CD8-positive, alpha-beta T cell (primary cell): ENCODE measurements at regions of chr17 and their contacts with region 1.

Region 1: GRCh38 chr17:29931231-29931932 is 1.4 kb upstream of the SSH2 start:
- DNase-seq: peak; percentile 27 to 91 (median 70)
- ATAC-seq: peak; percentile 66
- H3K4me3 ChIP-seq: peak overlapping the region; percentile 77 to 82
- H3K4me3 Mint-ChIP-seq: no peak overlapping the region
- H3K27ac ChIP-seq: peak overlapping the region in 1 of 2 experiments; percentile 37
- H3K27ac Mint-ChIP-seq: no peak overlapping the region
- H3K4me1 ChIP-seq: peaks cover 27% of the 10 kb centered on the region
- H3K4me1 Mint-ChIP-seq: peaks cover 29% of the 10 kb centered on the region
- H3K27me3 ChIP-seq: no peaks in the 10 kb centered on the region
- H3K27me3 Mint-ChIP-seq: no peaks in the 10 kb centered on the region
- CTCF ChIP-seq: peak; percentile 85

Region 2: DNA sequence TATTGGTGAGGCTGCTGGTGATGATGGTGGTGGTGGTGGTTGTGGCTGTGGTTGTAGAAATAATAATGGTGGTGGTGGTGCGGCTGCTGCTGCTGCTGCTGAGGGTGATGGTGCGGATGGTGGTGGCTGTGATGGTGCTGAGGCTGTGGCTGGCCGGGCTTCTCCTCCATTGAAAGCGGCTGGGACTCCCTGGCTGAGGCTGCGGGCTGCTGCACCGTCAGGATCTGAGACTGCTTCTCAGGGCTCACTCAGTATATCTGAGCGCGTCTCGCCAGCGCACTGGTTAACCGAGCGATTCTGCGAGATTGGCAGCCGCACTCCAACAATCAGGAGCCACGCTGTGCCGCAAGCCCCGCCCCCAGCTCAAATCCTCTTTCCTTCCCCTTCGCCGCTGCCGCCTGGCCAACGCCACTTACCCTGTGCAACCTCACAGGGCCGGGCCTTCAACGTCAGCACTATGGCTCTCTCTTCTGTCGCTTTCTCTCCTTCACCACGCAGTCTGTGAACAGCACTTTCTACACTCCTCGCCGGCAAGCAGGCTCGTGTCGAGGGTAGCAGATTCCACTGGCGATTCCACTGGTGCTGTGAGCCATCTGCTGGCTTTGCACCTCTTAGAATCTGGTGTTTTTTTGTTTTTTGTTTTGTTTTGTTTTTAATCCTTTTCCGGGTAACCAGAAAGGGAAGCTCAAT is 637.3 kb before region 1 on chr17 and contains the start of gene NUFIP2:
- CTCF ChIA-PET with region 1: no interaction called
- POLR2A ChIA-PET with region 1: no interaction called
- intact Hi-C with region 1: loop called in 1 of 2 experiments (anchors 5 kb)
- DNase-seq: peak; percentile 94 to 100 (median 99)
- ATAC-seq: peak; percentile 86
- H3K4me3 ChIP-seq: peak within 1 kb of the TSS; percentile 93 to 94
- H3K4me3 Mint-ChIP-seq: peak within 1 kb of the TSS; percentile 99
- H3K27ac ChIP-seq: peak within 1 kb of the TSS; percentile 70 to 89
- H3K27ac Mint-ChIP-seq: peak within 1 kb of the TSS; percentile 98
- H3K4me1 ChIP-seq: peaks cover 40% of the 10 kb centered on the region
- H3K4me1 Mint-ChIP-seq: peaks cover 42% of the 10 kb centered on the region
- H3K27me3 ChIP-seq: no peaks in the 10 kb centered on the region
- H3K27me3 Mint-ChIP-seq: no peaks in the 10 kb centered on the region
- CTCF ChIP-seq: no peak
- total RNA-seq, gene NUFIP2: 67.9 to 71.8 TPM

Region 3: DNA sequence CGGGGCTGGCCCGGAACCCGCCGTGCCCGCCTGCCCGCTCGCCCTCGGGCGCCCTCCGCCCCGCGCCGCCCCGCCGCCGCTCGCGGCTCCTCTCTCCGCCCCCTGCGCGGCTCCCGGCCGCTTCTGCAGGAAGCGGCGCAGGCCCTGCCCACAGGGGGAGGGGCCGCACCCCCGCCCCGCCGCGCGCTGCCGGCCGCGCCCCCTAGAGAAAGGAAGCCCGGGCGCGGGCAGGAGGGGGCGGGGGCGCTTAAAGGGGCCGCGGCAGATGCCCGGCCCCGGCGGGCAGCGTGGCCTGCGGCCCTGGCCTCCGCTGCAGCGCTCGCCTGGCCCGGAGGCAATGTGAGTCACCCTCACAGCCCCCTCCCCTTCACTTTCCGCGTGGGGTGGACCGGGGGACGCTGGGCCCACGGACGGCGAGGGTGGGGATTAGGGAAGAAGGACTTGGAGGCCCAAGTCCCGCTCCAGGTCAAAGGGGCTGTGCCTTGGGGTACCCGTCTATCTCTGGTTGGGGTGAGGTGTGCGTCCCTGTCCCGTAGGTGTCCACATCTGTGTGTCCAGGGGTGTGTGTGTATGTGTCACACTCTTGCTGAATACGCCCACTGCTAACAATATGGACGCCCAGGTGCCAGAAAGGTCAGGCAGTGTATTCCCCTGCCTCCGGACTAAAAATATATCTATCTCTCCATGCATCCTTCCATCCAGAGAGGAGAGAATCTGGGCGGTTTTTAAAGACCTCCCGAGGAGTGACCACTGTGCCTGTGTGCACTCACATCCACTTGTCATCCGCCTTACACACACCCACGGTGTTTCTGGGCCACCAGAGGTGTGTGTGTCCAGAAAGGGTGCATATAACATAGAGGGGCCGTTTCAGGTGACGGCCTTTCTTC is 341.6 kb before region 1 on chr17 and contains the start of gene GIT1:
- CTCF ChIA-PET with region 1: interaction called, 3 read pairs
- POLR2A ChIA-PET with region 1: no interaction called
- intact Hi-C with region 1: loop called in 1 of 2 experiments (anchors 2 kb)
- DNase-seq: peak; percentile 59 to 93 (median 83)
- ATAC-seq: peak; percentile 86
- H3K4me3 ChIP-seq: peak within 1 kb of the TSS; percentile 73 to 75
- H3K4me3 Mint-ChIP-seq: peak within 1 kb of the TSS; percentile 93
- H3K27ac ChIP-seq: peak within 1 kb of the TSS; percentile 18 to 64
- H3K27ac Mint-ChIP-seq: peak within 1 kb of the TSS; percentile 89
- H3K4me1 ChIP-seq: peaks cover 78% of the 10 kb centered on the region
- H3K4me1 Mint-ChIP-seq: peaks cover 59% of the 10 kb centered on the region
- H3K27me3 ChIP-seq: no peaks in the 10 kb centered on the region
- H3K27me3 Mint-ChIP-seq: no peaks in the 10 kb centered on the region
- CTCF ChIP-seq: no peak
- total RNA-seq, gene GIT1: 25.8 to 27.0 TPM

Region 4: DNA sequence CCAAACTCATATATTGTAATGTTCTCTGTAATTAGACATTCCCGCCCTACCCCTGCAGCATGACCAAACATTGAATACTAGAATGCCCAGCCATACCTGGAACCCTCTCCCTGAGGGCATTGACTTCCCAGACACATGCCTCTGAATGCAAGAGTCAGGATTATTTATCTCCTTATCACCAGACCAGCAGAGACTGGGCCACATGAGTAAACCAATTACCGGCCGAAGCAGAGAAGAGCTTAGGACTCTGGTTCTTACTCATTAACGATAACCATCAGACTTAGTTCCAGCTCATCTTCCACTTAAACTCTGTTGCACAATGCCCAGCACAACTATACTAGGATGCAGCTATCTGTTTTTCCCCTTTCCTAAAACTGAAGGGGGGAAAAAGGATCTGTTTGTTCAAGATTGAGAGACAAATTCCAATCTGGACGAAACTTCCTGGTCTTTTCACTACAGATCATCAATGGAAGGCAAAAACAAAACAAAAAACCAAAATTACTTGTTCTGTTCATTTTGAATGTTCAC is 220.4 kb before region 1 on chr17:
- CTCF ChIA-PET with region 1: interaction called, 3 read pairs
- POLR2A ChIA-PET with region 1: interaction called, 4 read pairs
- intact Hi-C with region 1: loop called in 1 of 2 experiments (anchors 5 kb)
- DNase-seq: no peak
- ATAC-seq: no peak
- H3K4me3 ChIP-seq: no peak overlapping the region
- H3K4me3 Mint-ChIP-seq: no peak overlapping the region
- H3K27ac ChIP-seq: no peak overlapping the region
- H3K27ac Mint-ChIP-seq: peak overlapping the region; percentile 84
- H3K4me1 ChIP-seq: peaks cover 36% of the 10 kb centered on the region
- H3K4me1 Mint-ChIP-seq: peaks cover 73% of the 10 kb centered on the region
- H3K27me3 ChIP-seq: no peaks in the 10 kb centered on the region
- H3K27me3 Mint-ChIP-seq: no peaks in the 10 kb centered on the region
- CTCF ChIP-seq: no peak

Region 5: GRCh38 chr17:29867643-29868181 is 63.7 kb before region 1 on chr17:
- CTCF ChIA-PET with region 1: interaction called, 20 read pairs
- POLR2A ChIA-PET with region 1: no interaction called
- intact Hi-C with region 1: loop called (anchors 1 to 5 kb)
- DNase-seq: peak in 1 of 9 experiments; percentile 16
- ATAC-seq: no peak
- H3K4me3 ChIP-seq: no peak overlapping the region
- H3K4me3 Mint-ChIP-seq: no peak overlapping the region
- H3K27ac ChIP-seq: no peak overlapping the region
- H3K27ac Mint-ChIP-seq: peak overlapping the region; percentile 27
- H3K4me1 ChIP-seq: no peaks in the 10 kb centered on the region
- H3K4me1 Mint-ChIP-seq: peaks cover 29% of the 10 kb centered on the region
- H3K27me3 ChIP-seq: no peaks in the 10 kb centered on the region
- H3K27me3 Mint-ChIP-seq: no peaks in the 10 kb centered on the region
- CTCF ChIP-seq: no peak

Region 6: GRCh38 chr17:30021708-30022317 is 90.4 kb after region 1 on chr17:
- CTCF ChIA-PET with region 1: interaction called, 7 read pairs
- POLR2A ChIA-PET with region 1: no interaction called
- intact Hi-C with region 1: loop called (anchors 1 to 5 kb)
- DNase-seq: peak in 6 of 9 experiments; percentile 3 to 68 (median 31)
- ATAC-seq: peak; percentile 76
- H3K4me3 ChIP-seq: no peak overlapping the region
- H3K4me3 Mint-ChIP-seq: no peak overlapping the region
- H3K27ac ChIP-seq: no peak overlapping the region
- H3K27ac Mint-ChIP-seq: no peak overlapping the region
- H3K4me1 ChIP-seq: no peaks in the 10 kb centered on the region
- H3K4me1 Mint-ChIP-seq: peaks cover 2% of the 10 kb centered on the region
- H3K27me3 ChIP-seq: no peaks in the 10 kb centered on the region
- H3K27me3 Mint-ChIP-seq: peaks cover 5% of the 10 kb centered on the region
- CTCF ChIP-seq: peak; percentile 88

Region 7: GRCh38 chr17:30104575-30105339 is 173.4 kb after region 1 on chr17:
- CTCF ChIA-PET with region 1: no interaction called
- POLR2A ChIA-PET with region 1: no interaction called
- intact Hi-C with region 1: no loop called
- DNase-seq: peak; percentile 44 to 85 (median 71)
- ATAC-seq: peak; percentile 95
- H3K4me3 ChIP-seq: peak overlapping the region; percentile 43 to 45
- H3K4me3 Mint-ChIP-seq: peak overlapping the region; percentile 85
- H3K27ac ChIP-seq: no peak overlapping the region
- H3K27ac Mint-ChIP-seq: no peak overlapping the region
- H3K4me1 ChIP-seq: no peaks in the 10 kb centered on the region
- H3K4me1 Mint-ChIP-seq: peaks cover 6% of the 10 kb centered on the region
- H3K27me3 ChIP-seq: no peaks in the 10 kb centered on the region
- H3K27me3 Mint-ChIP-seq: peaks cover 3% of the 10 kb centered on the region
- CTCF ChIP-seq: peak; percentile 93

Region 8: GRCh38 chr17:30869005-30869404 is 937.6 kb after region 1 on chr17:
- CTCF ChIA-PET with region 1: no interaction called
- POLR2A ChIA-PET with region 1: no interaction called
- intact Hi-C with region 1: no loop called
- DNase-seq: no peak
- ATAC-seq: no peak
- H3K4me3 ChIP-seq: no peak overlapping the region
- H3K4me3 Mint-ChIP-seq: no peak overlapping the region
- H3K27ac ChIP-seq: no peak overlapping the region
- H3K27ac Mint-ChIP-seq: no peak overlapping the region
- H3K4me1 ChIP-seq: no peaks in the 10 kb centered on the region
- H3K4me1 Mint-ChIP-seq: no peaks in the 10 kb centered on the region
- H3K27me3 ChIP-seq: no peaks in the 10 kb centered on the region
- H3K27me3 Mint-ChIP-seq: no peaks in the 10 kb centered on the region
- CTCF ChIP-seq: no peak